Psoas muscle (tissue), 8 donors: ENCODE measurements at regions of chr5 and their contacts with region 1.

Region 1: GRCh38 chr5:38237681-38238080 is 20.7 kb upstream of the EGFLAM start:
- DNase-seq: no peak
- ATAC-seq: no peak
- H3K4me3 ChIP-seq: no peak overlapping the region
- H3K27ac ChIP-seq: no peak overlapping the region
- H3K4me1 ChIP-seq: no peaks in the 10 kb centered on the region
- H3K27me3 ChIP-seq: no peaks in the 10 kb centered on the region
- CTCF ChIP-seq: no peak

Region 2: DNA sequence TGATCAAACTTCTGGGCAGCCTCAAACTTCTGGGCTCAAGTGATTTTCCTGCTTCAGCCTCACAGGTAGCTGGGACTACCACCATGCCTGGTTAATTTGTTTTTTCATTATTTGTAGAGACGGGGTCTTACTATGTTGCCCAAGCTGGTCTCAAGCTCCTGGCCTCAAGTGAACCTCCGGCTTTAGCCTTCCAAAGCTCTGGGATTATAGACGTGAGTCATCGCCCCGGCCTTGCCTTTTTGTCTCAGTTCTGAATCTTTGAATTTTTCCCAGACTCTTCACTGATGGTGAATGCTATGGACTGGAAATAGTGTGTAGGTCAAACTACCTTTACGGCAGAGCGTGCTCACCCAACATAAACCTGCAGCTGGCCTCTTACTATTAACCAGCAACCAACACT is 11.6 kb before region 1 on chr5:
- intact Hi-C with region 1: loop called in 1 of 2 experiments (anchors 1 kb)
- DNase-seq: no peak
- ATAC-seq: no peak
- H3K4me3 ChIP-seq: no peak overlapping the region
- H3K27ac ChIP-seq: no peak overlapping the region
- H3K4me1 ChIP-seq: no peaks in the 10 kb centered on the region
- H3K27me3 ChIP-seq: no peaks in the 10 kb centered on the region
- CTCF ChIP-seq: no peak